Motor neuron (in vitro differentiated cells): ENCODE measurements at regions of chr12 and their contacts with region 1.

Region 1: GRCh38 chr12:19915392-19916195 is 452.7 kb upstream of the PDE3A start:
- ATAC-seq: peak; percentile 72 to 89 (median 84)
- H3K4me3 ChIP-seq: no peak overlapping the region
- H3K27ac ChIP-seq: no peak overlapping the region
- H3K4me1 ChIP-seq: peaks cover 15 to 28% of the 10 kb centered on the region in 2 donors

Region 2: GRCh38 chr12:20212658-20213555 is 297.3 kb after region 1 on chr12:
- in situ Hi-C with region 1: loop called in 1 of 9 experiments (anchors 10 kb)
- ATAC-seq: peak; percentile 99 to 100 (median 99)
- H3K4me3 ChIP-seq: peak overlapping the region in 1 of 5 donors; percentile 1
- H3K27ac ChIP-seq: peak overlapping the region; percentile 61 to 64
- H3K4me1 ChIP-seq: peaks cover 12 to 20% of the 10 kb centered on the region in 2 donors

Region 3: GRCh38 chr12:20588042-20588441 is 672.4 kb after region 1 on chr12:
- in situ Hi-C with region 1: loop called in 1 of 9 experiments (anchors 25 kb)
- ATAC-seq: peak in 5 of 8 experiments; percentile 93 to 98 (median 97)
- H3K4me3 ChIP-seq: no peak overlapping the region
- H3K27ac ChIP-seq: peak overlapping the region; percentile 64 to 69
- H3K4me1 ChIP-seq: peaks cover 12 to 27% of the 10 kb centered on the region in 2 donors